ENCODE measurements at regions of chr4 and their contacts with region 1.

Region 1: GRCh38 chr4:109433205-109434006 is at the start of gene SEC24B:
- DNase-seq: peak; percentile 97
- total RNA-seq, gene SEC24B: 26.6 TPM

Region 2: DNA sequence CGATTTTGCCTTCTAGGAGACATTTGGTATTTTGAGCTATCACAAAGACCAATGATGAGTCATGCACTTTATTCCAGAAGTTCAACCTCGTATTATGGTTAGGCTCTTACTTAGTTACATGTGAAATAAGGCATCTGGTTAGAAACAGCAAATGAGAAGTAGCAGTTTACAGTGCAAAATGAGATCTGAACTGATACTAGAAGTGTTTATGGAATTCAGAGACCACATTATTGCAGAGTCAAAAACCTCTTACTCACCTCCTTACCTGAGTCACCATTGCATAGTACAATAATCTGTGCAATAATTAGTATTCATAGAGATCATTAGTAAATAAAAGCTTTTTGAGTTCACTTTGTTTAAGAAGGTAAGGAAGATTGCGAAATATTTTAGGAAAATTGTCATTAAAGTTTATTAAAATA is 38.9 kb after region 1 on chr4:
- intact Hi-C with region 1: loop called (anchors 5 kb)
- DNase-seq: no peak

Region 3: GRCh38 chr4:109559983-109560686 is 126.7 kb after region 1 on chr4 and contains the start of gene MCUB:
- intact Hi-C with region 1: loop called (anchors 5 kb)
- DNase-seq: peak; percentile 92
- total RNA-seq, gene MCUB: 6.6 TPM